ENCODE measurements at regions of chr18 and their contacts with region 1.

Region 1: DNA sequence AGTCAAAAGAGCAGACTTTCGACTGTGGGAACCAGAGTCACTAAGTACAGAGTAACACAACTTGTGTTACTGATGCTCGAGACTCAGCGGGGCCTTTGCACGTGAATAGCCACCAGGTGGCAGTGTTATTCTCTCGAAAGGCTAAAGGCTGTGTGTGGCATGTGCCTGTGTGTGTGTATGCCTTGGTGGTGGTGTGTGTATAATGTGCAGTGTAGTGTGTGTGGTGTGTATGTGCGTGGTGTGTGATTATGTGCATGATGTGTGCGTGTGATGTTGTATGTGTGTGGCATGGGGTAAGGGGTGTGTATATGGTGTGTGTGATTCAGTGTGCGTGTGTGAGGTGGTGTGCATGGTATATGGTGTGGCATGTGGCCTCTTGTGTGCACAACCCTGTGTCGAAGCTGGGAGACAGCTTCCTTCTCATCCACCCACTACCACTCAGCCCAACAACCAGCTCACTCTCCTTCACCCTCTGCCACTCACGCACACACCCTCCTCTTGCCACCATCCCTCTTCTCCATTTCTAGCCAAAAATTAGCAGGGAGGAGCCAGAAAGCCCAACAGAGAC is 83.0 kb upstream of the ZNF532 start:
- DNase-seq: peak; percentile 84
- ATAC-seq: peak; percentile 93
- H3K4me3 ChIP-seq: no peak overlapping the region
- H3K4me3 Mint-ChIP-seq: no peak overlapping the region
- H3K27ac ChIP-seq: no peak overlapping the region
- H3K27ac Mint-ChIP-seq: no peak overlapping the region
- H3K4me1 ChIP-seq: peaks cover 2 to 5% of the 10 kb centered on the region in 2 donors
- H3K4me1 Mint-ChIP-seq: peaks cover 3% of the 10 kb centered on the region
- H3K27me3 ChIP-seq: no peaks in the 10 kb centered on the region
- H3K27me3 Mint-ChIP-seq: no peaks in the 10 kb centered on the region
- CTCF ChIP-seq: peak; percentile 93

Region 2: DNA sequence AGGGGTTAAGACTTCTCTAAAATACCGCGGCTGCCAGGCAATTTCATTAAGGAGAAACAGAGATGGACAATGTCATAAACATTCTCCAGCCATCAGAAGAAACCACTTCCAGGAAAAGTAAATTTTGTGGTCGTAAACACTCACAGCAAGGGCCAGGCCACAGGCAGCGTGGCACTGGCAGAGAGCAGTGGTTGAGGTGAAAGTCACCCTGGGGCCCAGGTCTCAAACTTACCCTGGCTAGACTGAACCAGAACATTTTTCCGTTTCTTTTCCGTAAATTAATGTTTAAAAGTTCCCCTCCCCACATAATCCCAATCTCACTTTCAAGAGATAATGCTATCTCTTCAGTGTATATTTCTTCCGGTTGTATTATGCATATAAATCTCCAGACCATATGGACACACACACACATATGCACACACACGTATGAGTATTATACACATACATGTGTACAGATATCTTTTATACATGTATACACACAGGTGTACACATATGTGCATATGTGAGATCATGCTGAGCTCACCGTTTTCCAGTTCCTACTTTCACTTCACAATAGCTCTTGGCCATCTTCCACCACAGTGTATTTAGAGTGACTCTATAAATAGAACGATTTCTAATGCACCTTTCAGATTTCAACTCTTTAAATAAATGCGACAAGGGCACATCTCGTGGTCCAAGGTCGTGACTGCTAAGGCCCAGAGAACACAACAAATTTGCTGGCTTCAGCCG is 20.3 kb before region 1 on chr18:
- CTCF ChIA-PET with region 1: interaction called, 22 read pairs
- POLR2A ChIA-PET with region 1: no interaction called
- intact Hi-C with region 1: no loop called
- DNase-seq: peak; percentile 42
- ATAC-seq: peak; percentile 52
- H3K4me3 ChIP-seq: no peak overlapping the region
- H3K4me3 Mint-ChIP-seq: peak overlapping the region; percentile 24
- H3K27ac ChIP-seq: no peak overlapping the region
- H3K27ac Mint-ChIP-seq: peak overlapping the region; percentile 26
- H3K4me1 ChIP-seq: peaks cover 18 to 29% of the 10 kb centered on the region in 2 donors
- H3K4me1 Mint-ChIP-seq: peaks cover 25% of the 10 kb centered on the region
- H3K27me3 ChIP-seq: peaks cover 0 to 18% (median under 1%) of the 10 kb centered on the region in 4 experiments
- H3K27me3 Mint-ChIP-seq: peaks cover 13% of the 10 kb centered on the region
- CTCF ChIP-seq: no peak

Region 3: DNA sequence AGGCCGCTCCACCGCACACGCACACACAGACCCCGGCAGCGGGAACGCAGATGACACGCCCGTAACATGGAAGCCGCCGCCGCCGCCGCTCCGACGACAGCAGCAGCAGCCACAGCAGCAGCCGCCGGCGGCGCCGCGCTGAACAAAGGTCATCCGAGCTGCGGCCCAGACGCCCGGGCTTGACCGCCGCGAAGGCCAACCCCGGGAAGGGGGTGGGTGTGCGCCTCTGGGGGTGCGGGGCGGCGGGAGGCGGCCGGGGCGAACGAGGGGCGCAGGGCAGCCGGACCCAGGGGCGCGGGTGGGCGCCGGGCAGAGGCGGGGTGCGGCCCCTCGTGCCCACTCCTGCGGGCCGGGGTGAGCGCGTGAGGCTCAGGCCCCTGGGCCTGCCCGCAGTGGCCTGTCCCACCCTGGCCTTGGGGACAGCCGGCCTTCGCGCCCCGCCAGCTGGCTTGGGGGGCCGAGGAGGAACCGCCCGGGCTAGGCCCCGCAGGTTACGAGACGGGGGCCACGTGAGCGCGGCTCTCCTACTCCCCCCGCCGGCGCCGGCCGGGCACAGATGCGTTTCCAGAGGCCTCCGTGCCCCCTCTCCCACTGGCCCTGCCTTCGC is 81.9 kb after region 1 on chr18:
- CTCF ChIA-PET with region 1: interaction called, 4 read pairs
- POLR2A ChIA-PET with region 1: no interaction called
- intact Hi-C with region 1: loop called (anchors 10 kb)
- DNase-seq: peak; percentile 77
- ATAC-seq: peak; percentile 67
- H3K4me3 ChIP-seq: peak overlapping the region in 4 of 5 experiments; percentile 26 to 57 (median 52)
- H3K4me3 Mint-ChIP-seq: peak overlapping the region; percentile 83
- H3K27ac ChIP-seq: peak overlapping the region; percentile 38 to 81
- H3K27ac Mint-ChIP-seq: peak overlapping the region; percentile 91
- H3K4me1 ChIP-seq: peaks cover 20 to 24% of the 10 kb centered on the region in 2 donors
- H3K4me1 Mint-ChIP-seq: peaks cover 41% of the 10 kb centered on the region
- H3K27me3 ChIP-seq: no peaks in the 10 kb centered on the region
- H3K27me3 Mint-ChIP-seq: no peaks in the 10 kb centered on the region
- CTCF ChIP-seq: no peak

Region 4: DNA sequence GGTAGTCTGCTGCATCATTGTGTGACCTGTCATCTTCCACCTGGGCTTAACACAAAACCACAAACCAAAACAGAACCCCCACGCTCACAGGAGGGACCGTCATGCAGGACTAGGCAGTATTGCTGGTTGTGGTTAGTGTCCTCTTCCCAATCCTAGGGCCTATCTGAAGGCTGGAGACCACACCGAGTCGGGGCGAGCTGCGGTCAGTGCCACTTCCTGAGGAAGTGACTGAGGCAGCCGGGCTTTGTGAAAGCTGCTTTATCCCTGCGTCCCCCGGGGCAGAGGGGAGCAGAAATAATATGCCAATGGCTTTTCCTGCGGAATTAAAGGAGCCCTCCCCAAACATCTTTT is 105.9 kb after region 1 on chr18:
- CTCF ChIA-PET with region 1: no interaction called
- POLR2A ChIA-PET with region 1: no interaction called
- intact Hi-C with region 1: no loop called
- DNase-seq: peak; percentile 63
- ATAC-seq: peak; percentile 84
- H3K4me3 ChIP-seq: peak overlapping the region in 2 of 5 experiments; percentile 5 to 22
- H3K4me3 Mint-ChIP-seq: peak overlapping the region; percentile 68
- H3K27ac ChIP-seq: peak overlapping the region; percentile 31 to 54
- H3K27ac Mint-ChIP-seq: peak overlapping the region; percentile 84
- H3K4me1 ChIP-seq: peaks cover 20 to 28% of the 10 kb centered on the region in 2 donors
- H3K4me1 Mint-ChIP-seq: peaks cover 30% of the 10 kb centered on the region
- H3K27me3 ChIP-seq: no peaks in the 10 kb centered on the region
- H3K27me3 Mint-ChIP-seq: no peaks in the 10 kb centered on the region
- CTCF ChIP-seq: no peak

Region 5: GRCh38 chr18:59051470-59052165 is 269.9 kb after region 1 on chr18:
- CTCF ChIA-PET with region 1: interaction called, 471 read pairs
- POLR2A ChIA-PET with region 1: no interaction called
- intact Hi-C with region 1: no loop called
- DNase-seq: no peak
- ATAC-seq: no peak
- H3K4me3 ChIP-seq: no peak overlapping the region
- H3K4me3 Mint-ChIP-seq: no peak overlapping the region
- H3K27ac ChIP-seq: no peak overlapping the region
- H3K27ac Mint-ChIP-seq: no peak overlapping the region
- H3K4me1 ChIP-seq: peaks cover 18 to 22% of the 10 kb centered on the region in 2 donors
- H3K4me1 Mint-ChIP-seq: peaks cover 21% of the 10 kb centered on the region
- H3K27me3 ChIP-seq: no peaks in the 10 kb centered on the region
- H3K27me3 Mint-ChIP-seq: no peaks in the 10 kb centered on the region
- CTCF ChIP-seq: no peak

Region 6: GRCh38 chr18:59070181-59070912 is 288.6 kb after region 1 on chr18:
- CTCF ChIA-PET with region 1: interaction called, 471 read pairs
- POLR2A ChIA-PET with region 1: no interaction called
- intact Hi-C with region 1: loop called (anchors 1 kb)
- DNase-seq: peak; percentile 85
- ATAC-seq: peak; percentile 90
- H3K4me3 ChIP-seq: no peak overlapping the region
- H3K4me3 Mint-ChIP-seq: no peak overlapping the region
- H3K27ac ChIP-seq: no peak overlapping the region
- H3K27ac Mint-ChIP-seq: no peak overlapping the region
- H3K4me1 ChIP-seq: peaks cover 12 to 20% of the 10 kb centered on the region in 2 donors
- H3K4me1 Mint-ChIP-seq: peaks cover 14% of the 10 kb centered on the region
- H3K27me3 ChIP-seq: no peaks in the 10 kb centered on the region
- H3K27me3 Mint-ChIP-seq: no peaks in the 10 kb centered on the region
- CTCF ChIP-seq: peak; percentile 90

Region 7: GRCh38 chr18:59402432-59403090 is 620.9 kb after region 1 on chr18:
- CTCF ChIA-PET with region 1: interaction called, 3 read pairs
- POLR2A ChIA-PET with region 1: no interaction called
- intact Hi-C with region 1: loop called (anchors 2 kb)
- DNase-seq: peak; percentile 71
- ATAC-seq: peak; percentile 91
- H3K4me3 ChIP-seq: no peak overlapping the region
- H3K4me3 Mint-ChIP-seq: no peak overlapping the region
- H3K27ac ChIP-seq: no peak overlapping the region
- H3K27ac Mint-ChIP-seq: no peak overlapping the region
- H3K4me1 ChIP-seq: no peaks in the 10 kb centered on the region
- H3K4me1 Mint-ChIP-seq: no peaks in the 10 kb centered on the region
- H3K27me3 ChIP-seq: no peaks in the 10 kb centered on the region
- H3K27me3 Mint-ChIP-seq: peaks cover 9% of the 10 kb centered on the region
- CTCF ChIP-seq: peak; percentile 88

Measured in B cell (primary cell).